PC-9 (cell line): ENCODE measurements at regions of chr18 and their contacts with region 1.

Region 1: DNA sequence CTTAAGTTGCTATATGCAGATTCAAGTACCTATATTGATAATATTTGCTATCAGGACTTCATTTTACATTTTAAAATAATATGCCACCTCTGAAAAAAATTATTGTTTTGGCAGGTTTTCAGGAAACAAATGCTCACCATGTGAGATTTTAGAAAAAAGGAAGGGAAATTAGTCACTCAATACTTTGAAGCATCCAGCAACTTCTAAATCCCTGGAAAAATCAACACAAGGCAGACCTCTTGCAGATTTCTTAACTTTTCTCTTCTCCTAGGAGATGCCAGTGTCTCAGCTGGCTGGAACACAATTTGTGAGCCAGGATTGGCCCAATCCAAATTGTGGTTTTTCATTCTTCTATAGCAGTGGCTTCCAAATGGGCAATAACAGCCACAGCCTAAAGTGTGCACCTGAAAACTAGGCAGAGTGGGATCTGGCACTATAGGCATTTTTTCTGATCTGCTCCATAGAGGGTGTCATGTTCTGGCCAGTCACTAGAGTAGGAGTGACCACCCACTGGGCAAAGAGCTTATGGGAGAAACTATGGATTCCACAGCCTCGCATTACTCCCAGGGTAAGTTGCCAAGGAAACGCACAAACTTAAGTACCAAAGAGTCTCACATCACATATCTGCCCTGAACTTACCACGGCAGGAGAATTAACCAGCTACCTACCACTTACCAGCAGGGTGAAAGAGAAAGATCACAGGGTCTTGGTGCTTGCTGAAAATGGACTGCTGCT is 28.1 kb upstream of the THOC1 start:
- DNase-seq: no peak
- H3K4me3 ChIP-seq: no peak overlapping the region
- H3K27ac ChIP-seq: no peak overlapping the region
- H3K4me1 ChIP-seq: no peaks in the 10 kb centered on the region
- H3K27me3 ChIP-seq: peaks cover 92% of the 10 kb centered on the region
- CTCF ChIP-seq: no peak

Region 2: DNA sequence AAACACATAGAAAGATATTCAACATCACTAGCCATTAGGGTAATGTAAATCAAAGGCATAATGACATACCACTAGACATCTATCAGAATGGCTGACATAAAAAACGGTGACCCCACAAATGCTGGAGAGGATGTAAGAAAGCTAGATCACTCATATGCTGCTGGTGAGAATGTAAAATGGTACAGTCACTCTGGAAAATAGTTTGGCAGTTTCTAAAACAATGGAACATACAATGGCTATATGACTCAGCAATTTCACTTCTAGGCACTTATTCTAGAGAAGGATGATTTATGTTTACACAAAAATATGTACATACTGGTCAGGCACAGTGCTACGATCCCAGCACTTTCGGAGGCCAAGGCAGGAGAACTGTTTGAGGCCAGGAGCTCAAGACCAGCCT is 117.3 kb after region 1 on chr18:
- CTCF ChIA-PET with region 1: no interaction called
- POLR2A ChIA-PET with region 1: interaction called, 10 read pairs
- intact Hi-C with region 1: no loop called
- DNase-seq: no peak
- H3K4me3 ChIP-seq: no peak overlapping the region
- H3K27ac ChIP-seq: no peak overlapping the region
- H3K4me1 ChIP-seq: no peaks in the 10 kb centered on the region
- H3K27me3 ChIP-seq: peaks cover 8% of the 10 kb centered on the region; the same call in 1 of the 2 replicates
- CTCF ChIP-seq: no peak